GM12878 (cell line): ENCODE measurements at regions of chr2 and their contacts with region 1.

Region 1: DNA sequence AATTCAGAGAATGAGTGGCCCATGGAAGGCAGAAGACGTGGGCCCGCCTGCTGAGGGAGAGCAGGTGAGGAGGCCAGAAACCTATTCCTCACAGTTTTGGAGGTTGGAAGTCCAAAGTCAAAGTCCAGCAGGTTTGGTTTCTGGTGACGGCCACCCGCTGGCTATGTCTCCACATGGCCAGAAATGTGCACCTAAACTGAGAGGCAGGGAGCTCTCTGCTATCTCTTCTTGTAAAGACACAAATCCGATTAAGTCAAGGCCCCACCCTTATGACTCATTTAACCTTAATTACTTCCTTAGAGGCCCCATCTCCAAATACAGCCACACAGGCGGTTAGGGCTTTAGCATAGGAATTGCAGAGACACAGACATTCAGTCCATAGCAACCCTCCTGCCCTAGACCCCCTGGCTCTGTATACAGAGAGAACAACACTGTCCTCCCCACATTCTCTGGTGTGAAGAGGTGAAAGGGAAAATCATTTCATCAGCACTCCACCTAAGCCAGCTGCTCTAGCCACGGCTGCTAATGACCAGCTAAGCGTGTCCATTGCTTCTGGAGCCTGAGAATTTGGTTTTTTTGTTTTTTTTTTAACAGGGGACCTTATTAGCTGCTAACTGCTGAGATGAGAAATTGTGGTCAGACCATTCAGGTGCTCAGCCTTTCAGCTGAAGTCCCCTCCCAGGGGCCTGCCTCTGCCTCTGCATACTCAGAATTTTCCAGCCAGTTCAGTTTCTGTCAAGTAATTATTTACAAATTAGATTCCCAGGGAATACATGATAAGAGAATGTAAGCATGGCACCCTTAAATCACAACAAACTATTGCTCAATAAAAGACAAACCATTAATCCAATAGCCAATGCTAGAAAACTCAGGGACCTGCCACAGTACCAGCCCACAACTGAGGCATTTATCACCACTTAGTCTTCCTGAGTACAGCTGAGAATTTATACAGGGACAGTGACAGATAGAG is 368.7 kb upstream of the ID2 start:
- DNase-seq: peak; percentile 96
- ATAC-seq: peak; percentile 81
- H3K4me3 ChIP-seq: no peak overlapping the region; the same call in 1 of the 2 replicates
- H3K27ac ChIP-seq: peak overlapping the region; percentile 72
- H3K4me1 ChIP-seq: peaks cover 53% of the 10 kb centered on the region
- H3K27me3 ChIP-seq: no peaks in the 10 kb centered on the region
- CTCF ChIP-seq: no peak
- EP300 ChIP-seq: peak; percentile 46 to 86; a peak in 3 of 4 replicates
- POLR2A ChIP-seq: no peak
- RAD21 ChIP-seq: peak; percentile 29

Region 2: DNA sequence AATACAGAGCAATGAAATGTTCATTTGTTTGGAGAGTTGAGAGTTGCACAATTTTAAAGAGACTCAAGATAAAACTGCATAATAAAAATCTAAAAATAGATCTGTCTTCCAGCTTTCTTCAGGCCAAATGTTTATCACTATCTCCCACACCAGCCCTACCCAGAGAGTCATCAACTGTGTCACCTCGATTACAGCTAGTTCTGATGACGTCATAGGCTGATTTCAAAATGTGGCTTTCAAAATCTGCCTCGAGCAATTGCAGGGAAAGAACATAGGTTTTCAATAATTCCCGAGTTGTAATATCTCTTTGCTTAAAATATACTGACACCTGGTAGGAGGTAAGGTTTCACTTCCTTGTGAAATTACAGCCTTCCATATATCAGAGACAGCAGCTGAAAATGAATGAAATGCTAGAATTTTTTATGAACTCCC is 308.9 kb before region 1 on chr2:
- CTCF ChIA-PET with region 1: no interaction called
- POLR2A ChIA-PET with region 1: interaction called, 6 read pairs
- RAD21 ChIA-PET with region 1: interaction called, 13 read pairs
- SMC1A ChIA-PET with region 1: interaction called, 11 read pairs
- in situ Hi-C with region 1: no loop called
- intact Hi-C with region 1: no loop called
- DNase-seq: no peak
- ATAC-seq: peak; percentile 46
- H3K4me3 ChIP-seq: no peak overlapping the region
- H3K27ac ChIP-seq: no peak overlapping the region
- H3K4me1 ChIP-seq: peaks cover 4% of the 10 kb centered on the region; the same call in 1 of the 2 replicates
- H3K27me3 ChIP-seq: no peaks in the 10 kb centered on the region
- CTCF ChIP-seq: no peak
- EP300 ChIP-seq: peak; percentile 69 to 79; a peak in 2 of 4 replicates
- POLR2A ChIP-seq: no peak
- RAD21 ChIP-seq: no peak

Region 3: DNA sequence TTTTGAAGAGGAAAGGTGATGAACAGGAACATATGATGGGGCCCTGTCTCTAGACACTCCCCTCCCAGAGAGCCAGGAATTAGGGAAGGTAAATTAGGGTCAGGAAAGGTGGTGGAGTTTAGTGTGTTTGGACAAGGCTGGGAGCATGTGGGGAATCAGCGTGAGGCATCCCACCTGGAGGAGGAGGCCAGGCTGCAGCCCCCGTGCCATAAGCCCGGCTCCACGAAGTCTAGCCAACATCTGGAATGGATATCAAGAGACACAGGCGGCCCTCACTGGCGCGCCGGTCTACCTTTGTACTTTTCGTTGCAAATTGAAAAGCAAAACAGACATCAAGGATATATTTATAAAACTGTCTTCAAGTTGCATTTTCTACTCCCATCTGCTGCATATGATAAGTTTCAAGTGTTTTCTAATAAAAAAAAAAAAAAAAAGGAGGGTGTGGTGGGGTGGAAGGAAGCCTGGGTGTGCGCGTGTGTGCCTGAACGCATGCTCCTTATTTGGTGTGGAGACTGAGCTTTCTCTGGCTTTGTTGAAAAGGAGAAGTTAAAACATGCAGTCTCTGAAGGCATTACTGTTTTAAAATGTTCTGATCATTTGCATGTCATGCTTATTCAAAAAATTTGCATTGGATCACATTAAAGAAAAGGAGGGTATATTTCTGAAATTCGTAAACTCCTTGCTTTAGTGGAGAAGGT is 178.0 kb before region 1 on chr2:
- CTCF ChIA-PET with region 1: no interaction called
- POLR2A ChIA-PET with region 1: no interaction called
- RAD21 ChIA-PET with region 1: no interaction called
- SMC1A ChIA-PET with region 1: no interaction called
- in situ Hi-C with region 1: no loop called
- intact Hi-C with region 1: no loop called
- DNase-seq: no peak
- ATAC-seq: no peak
- H3K4me3 ChIP-seq: no peak overlapping the region
- H3K27ac ChIP-seq: no peak overlapping the region
- H3K4me1 ChIP-seq: no peaks in the 10 kb centered on the region
- H3K27me3 ChIP-seq: no peaks in the 10 kb centered on the region
- CTCF ChIP-seq: no peak
- EP300 ChIP-seq: no peak
- POLR2A ChIP-seq: no peak
- RAD21 ChIP-seq: no peak

Region 4: GRCh38 chr2:8252997-8253694 is 60.0 kb before region 1 on chr2:
- CTCF ChIA-PET with region 1: interaction called, 3 read pairs
- POLR2A ChIA-PET with region 1: no interaction called
- RAD21 ChIA-PET with region 1: interaction called, 17 read pairs
- SMC1A ChIA-PET with region 1: interaction called, 3 read pairs
- in situ Hi-C with region 1: no loop called
- intact Hi-C with region 1: no loop called
- DNase-seq: peak; percentile 48
- ATAC-seq: peak; percentile 98
- H3K4me3 ChIP-seq: no peak overlapping the region
- H3K27ac ChIP-seq: no peak overlapping the region
- H3K4me1 ChIP-seq: peaks cover 20% of the 10 kb centered on the region
- H3K27me3 ChIP-seq: no peaks in the 10 kb centered on the region
- CTCF ChIP-seq: no peak
- EP300 ChIP-seq: peak; percentile 38 to 47; a peak in 1 of 4 replicates
- POLR2A ChIP-seq: no peak
- RAD21 ChIP-seq: no peak

Region 5: GRCh38 chr2:8337321-8337720 is 24.2 kb after region 1 on chr2:
- CTCF ChIA-PET with region 1: no interaction called
- POLR2A ChIA-PET with region 1: interaction called, 3 read pairs
- RAD21 ChIA-PET with region 1: interaction called, 6 read pairs
- SMC1A ChIA-PET with region 1: interaction called, 21 read pairs
- in situ Hi-C with region 1: no loop called
- intact Hi-C with region 1: no loop called
- DNase-seq: no peak
- ATAC-seq: peak; percentile 58
- H3K4me3 ChIP-seq: no peak overlapping the region
- H3K27ac ChIP-seq: no peak overlapping the region
- H3K4me1 ChIP-seq: no peaks in the 10 kb centered on the region
- H3K27me3 ChIP-seq: no peaks in the 10 kb centered on the region
- CTCF ChIP-seq: no peak
- EP300 ChIP-seq: no peak
- POLR2A ChIP-seq: no peak
- RAD21 ChIP-seq: no peak

Region 6: DNA sequence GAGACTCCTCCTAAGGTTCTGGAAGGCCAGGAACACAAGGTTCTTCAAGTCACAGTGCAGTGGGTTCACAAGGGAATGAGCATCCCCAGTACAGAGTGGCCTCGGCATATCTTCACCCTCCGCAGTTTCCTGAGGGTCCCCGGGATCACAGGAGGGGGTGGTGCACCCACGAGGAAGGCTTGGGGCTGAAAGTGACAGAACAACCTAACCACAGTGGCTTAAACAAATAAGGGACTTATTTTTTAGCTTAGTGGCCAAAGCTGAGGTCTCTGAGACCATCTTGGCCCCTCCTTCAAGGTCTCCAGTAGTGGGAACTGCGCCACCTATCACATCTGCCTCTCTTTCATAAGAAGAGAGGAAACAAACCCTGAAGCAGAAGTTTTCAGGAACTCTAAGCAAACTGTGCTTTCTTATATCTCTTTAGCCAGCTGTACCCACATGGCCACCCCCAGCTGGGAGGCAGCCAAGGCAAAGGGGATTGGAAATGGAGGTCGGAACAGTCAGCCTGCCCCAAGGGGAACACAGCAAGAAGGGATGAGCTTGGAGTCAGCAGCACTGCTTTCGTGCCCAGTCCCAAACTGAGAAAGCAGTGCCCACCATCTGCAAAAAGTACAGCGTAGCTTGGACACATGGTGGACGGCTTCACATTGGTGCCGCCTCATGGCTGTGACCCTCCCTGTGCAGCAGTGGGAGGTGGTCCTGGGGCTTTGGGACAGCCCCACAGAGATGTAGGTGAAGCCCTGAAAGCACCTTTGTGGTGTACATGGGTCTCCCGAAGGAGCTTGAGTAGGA is 108.7 kb after region 1 on chr2:
- CTCF ChIA-PET with region 1: interaction called, 11 read pairs
- POLR2A ChIA-PET with region 1: interaction called, 5 read pairs
- RAD21 ChIA-PET with region 1: interaction called, 47 read pairs
- SMC1A ChIA-PET with region 1: interaction called, 352 read pairs
- in situ Hi-C with region 1: no loop called
- intact Hi-C with region 1: no loop called
- DNase-seq: peak; percentile 71
- ATAC-seq: peak; percentile 85
- H3K4me3 ChIP-seq: no peak overlapping the region
- H3K27ac ChIP-seq: peak overlapping the region; percentile 46
- H3K4me1 ChIP-seq: peaks cover 16% of the 10 kb centered on the region
- H3K27me3 ChIP-seq: no peaks in the 10 kb centered on the region
- CTCF ChIP-seq: peak; percentile 26 to 44 (median 29); a peak in 5 of 6 replicates
- EP300 ChIP-seq: peak; percentile 56 to 80; a peak in 3 of 4 replicates
- POLR2A ChIP-seq: no peak
- RAD21 ChIP-seq: peak; percentile 49

Region 7: GRCh38 chr2:8488001-8488738 is 175.0 kb after region 1 on chr2:
- CTCF ChIA-PET with region 1: no interaction called
- POLR2A ChIA-PET with region 1: interaction called, 4 read pairs
- RAD21 ChIA-PET with region 1: interaction called, 17 read pairs
- SMC1A ChIA-PET with region 1: interaction called, 12 read pairs
- in situ Hi-C with region 1: no loop called
- intact Hi-C with region 1: loop called (anchors 1 kb)
- DNase-seq: peak; percentile 95
- ATAC-seq: peak; percentile 63
- H3K4me3 ChIP-seq: peak overlapping the region; percentile 75
- H3K27ac ChIP-seq: peak overlapping the region; percentile 80
- H3K4me1 ChIP-seq: peaks cover 19% of the 10 kb centered on the region
- H3K27me3 ChIP-seq: no peaks in the 10 kb centered on the region
- CTCF ChIP-seq: no peak
- EP300 ChIP-seq: peak; percentile 78 to 80; a peak in 3 of 4 replicates
- POLR2A ChIP-seq: no peak
- RAD21 ChIP-seq: peak; percentile 1; the same call in 1 of the 2 replicates

Region 8: DNA sequence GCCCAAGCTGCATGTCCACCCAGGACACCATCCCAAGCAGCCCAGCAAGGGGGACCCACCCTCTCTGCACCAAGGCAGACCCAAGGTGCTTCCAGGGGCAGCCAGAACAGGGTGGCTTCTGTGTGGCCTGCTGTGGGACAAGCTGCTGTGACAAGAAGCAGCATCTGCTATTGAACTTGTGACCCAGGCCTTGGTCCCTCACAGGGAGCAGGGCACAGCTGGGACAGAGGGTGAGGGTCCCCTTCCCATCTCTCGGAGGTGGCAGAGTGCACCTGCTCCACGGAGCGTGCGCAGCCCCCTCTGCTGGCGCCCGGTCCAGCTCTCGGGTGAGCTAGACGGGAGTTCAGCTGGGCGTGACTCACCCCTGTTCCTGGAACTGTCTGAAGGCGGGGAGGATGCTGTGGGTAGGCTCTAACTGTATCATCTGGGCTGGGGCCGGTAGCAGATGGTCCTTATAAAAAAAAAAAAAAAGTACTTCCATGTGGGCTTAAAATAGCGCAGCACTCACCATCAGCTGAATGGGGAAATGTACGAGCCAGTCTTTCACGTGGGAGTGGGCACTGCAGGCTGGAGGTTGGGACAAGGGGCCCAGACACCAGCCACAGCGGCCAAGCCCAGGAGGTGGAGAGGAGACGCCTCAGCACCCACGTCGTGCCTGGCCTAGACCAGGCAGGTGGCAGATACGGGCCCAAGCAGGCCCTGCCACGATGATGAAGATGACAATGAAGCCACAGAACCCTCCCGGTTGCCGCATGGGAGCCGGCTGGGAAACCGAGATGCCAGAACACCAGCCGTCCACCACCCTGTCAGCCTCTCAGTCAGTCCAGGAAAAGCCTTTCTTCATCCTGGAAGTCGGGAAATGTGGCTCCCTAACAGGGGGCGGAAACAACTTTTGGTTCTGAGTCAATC is 231.9 kb after region 1 on chr2:
- CTCF ChIA-PET with region 1: no interaction called
- POLR2A ChIA-PET with region 1: no interaction called
- RAD21 ChIA-PET with region 1: interaction called, 11 read pairs
- SMC1A ChIA-PET with region 1: interaction called, 7 read pairs
- in situ Hi-C with region 1: no loop called
- intact Hi-C with region 1: loop called (anchors 1 kb)
- DNase-seq: peak; percentile 62
- ATAC-seq: peak; percentile 71
- H3K4me3 ChIP-seq: no peak overlapping the region
- H3K27ac ChIP-seq: peak overlapping the region; percentile 95
- H3K4me1 ChIP-seq: peaks cover 56% of the 10 kb centered on the region
- H3K27me3 ChIP-seq: no peaks in the 10 kb centered on the region
- CTCF ChIP-seq: peak; percentile 44 to 66 (median 54); a peak in 5 of 6 replicates
- EP300 ChIP-seq: peak; percentile 8 to 64; a peak in 2 of 4 replicates
- POLR2A ChIP-seq: peak; percentile 29
- RAD21 ChIP-seq: peak; percentile 60